Aorta (tissue), 5 donors: ENCODE measurements at regions of chr18 and their contacts with region 1.

Region 1: GRCh38 chr18:22385718-22386117 is 32.0 kb downstream of the CTAGE1 start:
- DNase-seq: no peak
- ATAC-seq: no peak
- H3K4me3 ChIP-seq: no peak overlapping the region
- H3K27ac ChIP-seq: no peak overlapping the region
- H3K4me1 ChIP-seq: peaks cover 6 to 10% of the 10 kb centered on the region in 2 donors
- H3K27me3 ChIP-seq: no peaks in the 10 kb centered on the region

Region 2: DNA sequence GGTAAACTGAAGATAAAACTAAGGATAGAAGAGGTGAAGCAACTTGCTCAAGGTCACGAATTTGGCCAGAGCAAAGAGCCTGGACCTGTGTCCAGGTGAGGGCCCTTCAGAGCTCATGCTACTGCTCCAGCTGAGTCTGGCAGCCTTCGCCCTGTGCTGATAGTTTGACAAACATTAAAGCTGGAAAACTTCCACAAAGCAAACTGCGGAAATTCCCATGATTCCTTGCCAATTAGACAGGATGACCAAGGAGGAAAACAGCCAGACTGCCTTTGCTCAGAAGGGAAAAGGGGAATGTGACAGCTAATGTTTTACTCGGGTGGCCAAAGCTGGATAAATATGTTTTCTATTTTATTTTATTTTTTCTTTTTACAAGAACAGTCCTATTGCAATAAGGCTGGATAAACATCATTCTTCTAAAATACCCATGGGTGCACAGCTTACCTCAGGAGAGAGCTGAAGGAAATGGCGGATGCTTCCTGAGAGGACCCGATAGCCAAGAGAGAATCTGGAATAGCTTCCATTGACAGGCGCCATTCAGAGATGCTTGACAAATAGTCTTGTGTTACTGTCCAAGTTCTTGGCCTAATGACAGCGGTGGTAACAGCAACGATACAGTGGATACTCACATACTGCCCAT is 37.3 kb after region 1 on chr18:
- intact Hi-C with region 1: loop called in 1 of 2 experiments (anchors 5 kb)
- DNase-seq: peak in 1 of 2 donors; percentile 64
- ATAC-seq: peak; percentile 17
- H3K4me3 ChIP-seq: no peak overlapping the region
- H3K27ac ChIP-seq: peak overlapping the region in 1 of 2 donors; percentile 89
- H3K4me1 ChIP-seq: peaks cover 0 to 7% of the 10 kb centered on the region in 2 donors
- H3K27me3 ChIP-seq: no peaks in the 10 kb centered on the region

Region 3: DNA sequence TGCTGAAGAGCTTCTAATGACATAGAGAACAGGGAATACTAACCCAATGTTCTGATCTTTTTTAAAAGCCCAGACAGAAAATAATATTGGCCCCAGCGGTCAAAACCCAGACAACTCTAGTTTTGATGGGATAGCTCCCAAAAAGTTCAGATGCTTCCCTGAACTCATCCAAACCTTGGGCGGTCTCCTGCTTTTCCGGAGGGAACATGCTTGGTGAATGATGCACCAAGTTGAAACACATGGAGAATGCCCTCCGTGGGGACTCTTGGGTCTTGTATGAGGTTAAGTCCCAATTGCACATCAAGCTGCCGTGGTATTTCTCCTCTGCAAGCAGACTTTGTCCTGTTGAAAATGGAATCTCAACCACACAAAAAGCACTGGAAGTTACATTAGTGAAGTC is 152.7 kb after region 1 on chr18:
- intact Hi-C with region 1: no loop called
- DNase-seq: peak in 1 of 2 donors; percentile 67
- ATAC-seq: peak; percentile 74
- H3K4me3 ChIP-seq: no peak overlapping the region
- H3K27ac ChIP-seq: no peak overlapping the region
- H3K4me1 ChIP-seq: peaks cover 4 to 7% of the 10 kb centered on the region in 2 donors
- H3K27me3 ChIP-seq: no peaks in the 10 kb centered on the region

Region 4: GRCh38 chr18:23356915-23357601 is 971.3 kb after region 1 on chr18:
- intact Hi-C with region 1: no loop called
- DNase-seq: no peak
- ATAC-seq: peak; percentile 65
- H3K4me3 ChIP-seq: no peak overlapping the region
- H3K27ac ChIP-seq: peak overlapping the region; percentile 10 to 99
- H3K4me1 ChIP-seq: peaks cover 10 to 11% of the 10 kb centered on the region in 2 donors
- H3K27me3 ChIP-seq: no peaks in the 10 kb centered on the region